Aorta (tissue), 5 donors: ENCODE measurements at regions of chr2 and their contacts with region 1.

Region 1: GRCh38 chr2:1546023-1546591 is 132.8 kb downstream of the TPO start:
- DNase-seq: peak in 1 of 2 donors; percentile 26
- ATAC-seq: no peak
- H3K4me3 ChIP-seq: no peak overlapping the region
- H3K27ac ChIP-seq: no peak overlapping the region
- H3K4me1 ChIP-seq: no peaks in the 10 kb centered on the region
- H3K27me3 ChIP-seq: no peaks in the 10 kb centered on the region

Region 2: GRCh38 chr2:854460-854859 is 691.6 kb before region 1 on chr2:
- intact Hi-C with region 1: loop called in 1 of 2 experiments (anchors 10 kb)
- DNase-seq: no peak
- ATAC-seq: no peak
- H3K4me3 ChIP-seq: no peak overlapping the region
- H3K27ac ChIP-seq: no peak overlapping the region
- H3K4me1 ChIP-seq: no peaks in the 10 kb centered on the region
- H3K27me3 ChIP-seq: no peaks in the 10 kb centered on the region

Region 3: GRCh38 chr2:1455466-1455865 is 90.6 kb before region 1 on chr2:
- intact Hi-C with region 1: no loop called
- DNase-seq: no peak
- ATAC-seq: no peak
- H3K4me3 ChIP-seq: no peak overlapping the region
- H3K27ac ChIP-seq: no peak overlapping the region
- H3K4me1 ChIP-seq: no peaks in the 10 kb centered on the region
- H3K27me3 ChIP-seq: no peaks in the 10 kb centered on the region

Region 4: DNA sequence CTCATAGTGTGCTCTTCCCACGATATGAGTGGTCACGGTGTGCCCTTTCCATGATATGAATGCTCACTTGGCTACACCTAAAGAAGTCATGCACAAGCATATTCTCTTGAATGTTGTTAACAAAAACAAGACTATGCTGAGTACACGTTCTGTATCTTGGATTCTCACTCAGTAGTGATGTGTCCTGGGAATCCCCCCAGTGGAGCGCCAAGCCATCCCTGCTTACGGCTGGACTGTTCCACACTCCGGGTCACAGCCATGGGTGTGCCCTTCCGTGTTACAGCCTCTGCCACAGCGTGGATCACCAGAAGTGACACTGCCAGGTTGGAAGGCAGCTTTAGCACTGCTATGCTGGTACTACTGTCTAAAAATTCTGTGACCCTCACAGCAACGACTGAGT is 73.8 kb before region 1 on chr2:
- intact Hi-C with region 1: no loop called
- DNase-seq: no peak
- ATAC-seq: no peak
- H3K4me3 ChIP-seq: no peak overlapping the region
- H3K27ac ChIP-seq: no peak overlapping the region
- H3K4me1 ChIP-seq: no peaks in the 10 kb centered on the region
- H3K27me3 ChIP-seq: peaks cover 0 to 2% of the 10 kb centered on the region in 2 donors

Region 5: DNA sequence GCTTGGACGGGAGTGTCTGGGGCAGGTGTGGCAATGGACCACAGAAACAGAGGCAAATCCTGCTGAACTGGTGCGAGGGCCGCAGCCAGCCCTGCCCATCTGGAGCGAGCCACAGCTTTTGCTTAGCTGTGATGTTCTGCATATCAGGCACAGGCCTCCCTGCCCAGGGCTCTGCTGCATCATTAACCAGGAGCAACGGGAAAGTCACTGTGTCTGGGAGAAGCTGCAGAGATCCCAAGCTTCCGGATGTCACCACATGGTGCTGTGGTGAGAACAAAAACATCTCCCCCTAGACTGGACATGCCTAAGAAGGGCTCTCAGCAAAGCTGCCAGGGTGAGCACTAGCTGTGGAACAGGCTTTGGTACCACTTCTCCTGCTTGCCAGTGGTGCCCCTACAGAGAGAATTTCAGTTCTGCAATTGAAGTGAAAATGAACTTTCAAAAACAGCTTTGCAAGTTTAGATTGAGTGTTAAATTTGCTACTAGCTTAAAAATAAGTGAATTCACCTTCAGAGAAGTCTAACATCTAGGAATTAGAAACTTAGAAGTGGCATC is 957.8 kb after region 1 on chr2:
- intact Hi-C with region 1: no loop called
- DNase-seq: no peak
- ATAC-seq: no peak
- H3K4me3 ChIP-seq: no peak overlapping the region
- H3K27ac ChIP-seq: no peak overlapping the region
- H3K4me1 ChIP-seq: no peaks in the 10 kb centered on the region
- H3K27me3 ChIP-seq: no peaks in the 10 kb centered on the region